H1 (cell line): ENCODE measurements at regions of chr22 and their contacts with region 1.

Region 1: GRCh38 chr22:36239401-36240171 is at the start of gene APOL2:
- DNase-seq: peak; percentile 77 to 83
- H3K4me3 ChIP-seq: peak within 1 kb of the TSS; percentile 35 to 67 (median 40)
- H3K27ac ChIP-seq: peak within 1 kb of the TSS; percentile 47; the same call in 1 of the 2 replicates
- H3K4me1 ChIP-seq: peaks cover 0 to 14% (median 9%) of the 10 kb centered on the region in 4 experiments; a peak in 6 of 7 replicates
- H3K27me3 ChIP-seq: no peaks in the 10 kb centered on the region
- CTCF ChIP-seq: peak; percentile 65 to 86 (median 82)
- EP300 ChIP-seq: no peak
- POLR2A ChIP-seq: peak; percentile 34 to 61; a peak in 2 of 3 replicates
- RAD21 ChIP-seq: peak; percentile 51 to 58
- total RNA-seq, gene APOL2: 11.0 and 12.0 TPM in 2 replicates

Region 2: GRCh38 chr22:36166518-36167220 is 72.9 kb before region 1 on chr22:
- CTCF ChIA-PET with region 1: no interaction called
- POLR2A ChIA-PET with region 1: no interaction called
- DNase-seq: no peak
- H3K4me3 ChIP-seq: no peak overlapping the region
- H3K27ac ChIP-seq: no peak overlapping the region
- H3K4me1 ChIP-seq: no peaks in the 10 kb centered on the region
- H3K27me3 ChIP-seq: no peaks in the 10 kb centered on the region
- CTCF ChIP-seq: no peak
- EP300 ChIP-seq: no peak
- POLR2A ChIP-seq: no peak
- RAD21 ChIP-seq: no peak

Region 3: DNA sequence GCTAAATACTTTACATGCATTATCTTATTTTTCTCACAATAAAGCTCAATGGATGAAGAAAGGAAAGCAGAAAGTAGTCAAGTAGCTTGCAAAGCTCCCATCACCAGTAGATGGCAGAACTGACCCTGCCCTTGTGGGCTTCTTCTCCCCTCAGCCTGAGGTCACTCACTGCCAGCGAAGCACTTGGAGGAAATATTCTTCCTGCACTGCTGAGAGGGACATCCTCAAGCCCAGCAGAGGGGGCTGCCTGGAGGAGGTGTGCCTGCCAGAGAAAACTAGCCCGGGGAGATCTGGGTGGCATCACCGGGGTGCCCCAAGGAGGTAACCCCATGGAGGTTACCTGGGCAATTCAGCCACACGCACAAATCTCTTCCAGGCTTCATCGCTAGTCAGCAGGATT is 44.6 kb before region 1 on chr22:
- CTCF ChIA-PET with region 1: interaction called, 12 read pairs
- POLR2A ChIA-PET with region 1: interaction called, 3 read pairs
- DNase-seq: peak; percentile 36 to 66
- H3K4me3 ChIP-seq: no peak overlapping the region
- H3K27ac ChIP-seq: no peak overlapping the region
- H3K4me1 ChIP-seq: peaks cover 0 to 11% (median 9%) of the 10 kb centered on the region in 4 experiments; a peak in 6 of 7 replicates
- H3K27me3 ChIP-seq: no peaks in the 10 kb centered on the region
- CTCF ChIP-seq: peak; percentile 36 to 82 (median 81)
- EP300 ChIP-seq: no peak
- POLR2A ChIP-seq: no peak
- RAD21 ChIP-seq: peak; percentile 78 to 83

Region 4: GRCh38 chr22:36221799-36222751 is 17.5 kb before region 1 on chr22:
- CTCF ChIA-PET with region 1: interaction called, 25 read pairs
- POLR2A ChIA-PET with region 1: interaction called, 5 read pairs
- DNase-seq: peak; percentile 15 to 62
- H3K4me3 ChIP-seq: no peak overlapping the region
- H3K27ac ChIP-seq: no peak overlapping the region
- H3K4me1 ChIP-seq: peaks cover 0 to 3% (median 0%) of the 10 kb centered on the region in 4 experiments; a peak in 1 of 7 replicates
- H3K27me3 ChIP-seq: peaks cover 0 to 2% (median 0%) of the 10 kb centered on the region in 4 experiments; a peak in 1 of 7 replicates
- CTCF ChIP-seq: peak; percentile 81 to 84 (median 82)
- EP300 ChIP-seq: no peak
- POLR2A ChIP-seq: no peak
- RAD21 ChIP-seq: peak; percentile 72 to 76

Region 5: GRCh38 chr22:36252754-36253517 is 13.3 kb after region 1 on chr22 and contains the start of gene APOL1:
- CTCF ChIA-PET with region 1: interaction called, 30 read pairs
- POLR2A ChIA-PET with region 1: interaction called, 6 read pairs
- DNase-seq: no peak
- H3K4me3 ChIP-seq: no peak within 1 kb of the TSS
- H3K27ac ChIP-seq: no peak within 1 kb of the TSS
- H3K4me1 ChIP-seq: peaks cover 0 to 7% (median 0%) of the 10 kb centered on the region in 4 experiments; a peak in 3 of 7 replicates
- H3K27me3 ChIP-seq: no peaks in the 10 kb centered on the region; a peak in 1 of 7 replicates
- CTCF ChIP-seq: no peak
- EP300 ChIP-seq: no peak
- POLR2A ChIP-seq: no peak
- RAD21 ChIP-seq: no peak
- total RNA-seq, gene APOL1: not detected in 2 replicates

Region 6: DNA sequence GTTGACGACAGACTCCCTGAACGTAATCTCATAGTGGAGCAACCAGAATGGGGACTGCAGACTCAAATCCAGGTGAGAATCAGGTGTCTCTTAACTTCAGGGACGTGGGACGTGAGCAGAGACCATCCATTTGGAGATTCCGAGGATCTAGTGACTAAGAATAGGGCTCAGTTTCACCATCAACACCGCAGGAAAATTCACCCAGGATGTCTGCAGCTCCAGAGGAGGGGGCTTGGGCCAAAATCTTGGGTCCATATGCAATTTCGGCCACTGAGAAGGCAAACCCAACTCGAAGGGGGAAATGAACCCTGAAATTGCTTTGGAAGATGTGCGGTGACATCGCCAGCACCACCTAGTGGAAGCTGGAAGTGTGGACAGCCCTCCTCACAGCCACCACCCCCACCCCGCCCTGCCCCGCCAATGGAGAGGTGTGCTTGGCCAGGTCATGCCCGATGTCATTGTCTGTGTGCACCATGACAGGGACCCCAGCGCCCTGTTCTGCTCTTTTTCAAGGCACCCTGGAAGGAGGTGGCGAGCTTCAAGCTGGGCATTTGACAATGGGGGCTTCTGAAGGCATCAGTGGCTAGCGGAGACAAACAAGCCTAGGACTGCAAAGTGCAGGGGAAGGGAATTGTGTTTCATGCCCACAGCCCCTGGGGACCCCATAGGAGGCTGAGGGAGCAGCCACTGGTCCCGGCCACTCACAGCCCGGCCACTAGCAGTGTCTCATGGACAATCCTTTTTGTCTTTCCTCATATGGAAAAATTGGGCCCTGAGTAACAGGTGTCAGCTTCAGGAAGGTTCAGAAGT is 38.1 kb after region 1 on chr22:
- CTCF ChIA-PET with region 1: interaction called, 20 read pairs
- POLR2A ChIA-PET with region 1: interaction called, 5 read pairs
- DNase-seq: peak; percentile 56 to 77
- H3K4me3 ChIP-seq: peak overlapping the region in 1 of 4 experiments; percentile 39; a peak in 4 of 8 replicates
- H3K27ac ChIP-seq: no peak overlapping the region
- H3K4me1 ChIP-seq: no peaks in the 10 kb centered on the region; a peak in 3 of 7 replicates
- H3K27me3 ChIP-seq: no peaks in the 10 kb centered on the region
- CTCF ChIP-seq: peak; percentile 71 to 94 (median 86)
- EP300 ChIP-seq: no peak
- POLR2A ChIP-seq: 0 out of 3 replicates have a peak, but pooled peaks of 1 of the 2 experiments have one; percentile 17
- RAD21 ChIP-seq: peak; percentile 66 to 68